ENCODE measurements at regions of chr10 and their contacts with region 1.

Region 1: GRCh38 chr10:102280397-102281101 is 35.2 kb downstream of the GBF1 start:
- DNase-seq: no peak
- H3K4me3 Mint-ChIP-seq: peak overlapping the region; percentile 68
- H3K27ac Mint-ChIP-seq: peak overlapping the region; percentile 77
- H3K4me1 Mint-ChIP-seq: peaks cover 51% of the 10 kb centered on the region
- H3K27me3 Mint-ChIP-seq: no peaks in the 10 kb centered on the region

Region 2: GRCh38 chr10:102245101-102245931 is 35.2 kb before region 1 on chr10 and contains the start of gene GBF1:
- intact Hi-C with region 1: loop called (anchors 1 kb)
- DNase-seq: peak; percentile 97
- H3K4me3 Mint-ChIP-seq: peak within 1 kb of the TSS; percentile 100
- H3K27ac Mint-ChIP-seq: peak within 1 kb of the TSS; percentile 94
- H3K4me1 Mint-ChIP-seq: peaks cover 40% of the 10 kb centered on the region
- H3K27me3 Mint-ChIP-seq: peaks cover 14% of the 10 kb centered on the region
- total RNA-seq, gene GBF1: 45.2 and 47.7 TPM in 2 replicates

Region 3: DNA sequence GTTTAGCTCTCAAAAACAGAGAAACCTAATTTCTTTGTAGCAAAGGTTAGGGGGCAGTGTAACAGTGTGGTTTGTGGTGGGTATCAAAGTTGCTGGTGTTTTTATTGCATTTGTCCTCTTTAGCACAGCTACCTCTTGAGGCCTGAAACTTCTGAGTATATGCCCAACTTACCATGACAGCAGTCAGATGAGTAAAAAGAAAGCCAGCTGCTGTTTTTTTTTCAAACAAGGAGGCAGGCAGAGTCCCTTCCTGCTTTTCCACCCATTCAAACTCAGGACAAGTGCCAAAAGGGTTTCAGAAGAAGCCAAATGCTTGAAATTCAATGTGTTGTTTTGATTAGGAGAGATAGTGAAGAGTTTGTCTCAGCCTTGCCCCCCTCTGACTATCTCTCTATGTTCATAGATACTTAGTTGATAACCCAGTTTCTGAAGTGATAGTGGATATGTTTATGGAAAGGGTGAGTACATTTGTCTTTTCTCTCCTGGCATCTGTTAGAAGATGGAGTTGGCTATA is 12.1 kb before region 1 on chr10:
- intact Hi-C with region 1: loop called (anchors 2 kb)
- DNase-seq: no peak
- H3K4me3 Mint-ChIP-seq: peak overlapping the region; percentile 5
- H3K27ac Mint-ChIP-seq: peak overlapping the region; percentile 88
- H3K4me1 Mint-ChIP-seq: peaks cover 30% of the 10 kb centered on the region
- H3K27me3 Mint-ChIP-seq: no peaks in the 10 kb centered on the region

Region 4: GRCh38 chr10:102334101-102334500 is 53.6 kb after region 1 on chr10:
- intact Hi-C with region 1: loop called (anchors 5 kb)
- DNase-seq: no peak
- H3K4me3 Mint-ChIP-seq: no peak overlapping the region
- H3K27ac Mint-ChIP-seq: no peak overlapping the region
- H3K4me1 Mint-ChIP-seq: peaks cover 9% of the 10 kb centered on the region
- H3K27me3 Mint-ChIP-seq: no peaks in the 10 kb centered on the region

Measured in activated CD4-positive, alpha-beta T cell treated with anti-CD3 and anti-CD28 coated beads, Interleukin-2, amount 10 ng/mL, durations not matched to agents 24 days and 14 days (primary cell).